ENCODE measurements at regions of chr2 and their contacts with region 1.

Region 1: DNA sequence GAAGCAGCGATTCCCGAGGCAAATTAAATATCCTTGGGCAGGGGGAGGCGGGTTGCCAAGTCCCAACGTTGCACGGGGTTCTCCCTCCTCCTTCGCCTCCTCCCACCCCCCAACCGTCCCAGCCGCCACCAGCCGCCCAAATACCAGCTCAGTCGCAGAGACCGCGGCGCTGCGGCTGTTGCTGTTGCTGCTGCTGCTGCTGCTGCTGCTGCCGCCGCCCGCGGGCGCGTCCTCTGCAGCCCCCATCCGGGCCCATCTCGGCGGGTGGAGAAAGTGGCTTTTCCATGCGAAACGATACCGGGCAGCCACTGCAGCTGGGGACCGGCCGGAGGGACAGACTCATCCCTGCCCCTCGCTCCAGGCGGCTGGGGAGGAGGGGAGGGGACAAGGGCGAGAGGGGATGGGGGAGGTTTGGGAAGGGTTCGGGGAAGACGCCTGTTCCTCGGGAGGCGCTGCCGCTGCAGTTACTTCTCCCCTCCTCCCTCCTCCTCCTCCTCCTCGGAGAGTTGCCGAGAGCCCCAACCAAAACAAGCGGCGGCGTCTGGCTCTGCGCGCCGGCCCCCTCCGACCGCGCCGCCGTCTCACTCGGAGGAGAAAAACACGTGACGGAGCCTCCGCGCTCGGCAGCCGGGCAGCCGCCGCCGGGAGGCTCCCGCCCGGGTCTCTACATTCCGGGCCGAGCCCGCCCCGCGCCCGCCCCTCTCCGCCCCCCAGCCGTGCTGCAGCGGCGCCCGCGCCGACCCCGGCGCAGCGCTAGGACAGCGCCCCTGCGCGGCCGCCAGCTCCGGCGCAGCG is at the start of gene IRS1:
- DNase-seq: peak; percentile 87
- H3K4me3 ChIP-seq: peak within 1 kb of the TSS; percentile 89
- H3K27ac ChIP-seq: peak within 1 kb of the TSS; percentile 85
- H3K4me1 ChIP-seq: peaks cover 44% of the 10 kb centered on the region
- CTCF ChIP-seq: no peak
- total RNA-seq, gene IRS1: 15.9 and 18.1 TPM in 2 replicates

Region 2: DNA sequence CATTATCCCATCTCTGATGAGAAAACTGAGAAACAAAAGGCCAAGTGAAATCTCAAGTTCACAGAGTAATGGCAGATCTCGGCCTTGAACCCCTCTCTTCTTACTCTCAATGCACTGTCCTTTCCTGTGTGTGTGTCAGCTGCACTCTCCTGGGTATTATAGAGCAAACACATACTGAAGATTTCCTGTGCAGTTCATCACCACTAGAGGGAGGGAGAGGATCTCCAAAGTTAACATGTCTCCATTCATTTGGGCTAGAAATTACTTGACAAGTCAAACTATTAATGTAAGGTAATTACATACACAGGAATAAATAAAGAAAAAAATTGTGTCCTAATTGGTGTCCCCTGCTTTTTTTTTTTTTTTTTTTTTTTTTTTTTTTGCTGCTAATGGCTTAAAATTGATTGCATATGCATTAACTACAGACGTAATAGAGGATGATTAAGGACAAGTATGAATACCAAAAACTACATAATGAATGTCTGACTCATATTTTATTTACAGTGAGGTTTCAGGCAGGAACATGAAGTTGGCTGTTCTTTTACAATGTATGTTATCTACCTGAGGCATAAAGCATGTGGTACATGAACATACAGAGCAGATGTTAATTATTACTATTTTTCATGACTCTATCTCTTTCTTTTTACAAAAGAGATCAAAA is 1130.6 kb before region 1 on chr2:
- CTCF ChIA-PET with region 1: interaction called, 4 read pairs
- POLR2A ChIA-PET with region 1: interaction called, 4 read pairs
- intact Hi-C with region 1: loop called (anchors 2 kb)
- DNase-seq: peak; percentile 70
- H3K4me3 ChIP-seq: no peak overlapping the region
- H3K27ac ChIP-seq: no peak overlapping the region
- H3K4me1 ChIP-seq: no peaks in the 10 kb centered on the region
- CTCF ChIP-seq: peak; percentile 86

Region 3: DNA sequence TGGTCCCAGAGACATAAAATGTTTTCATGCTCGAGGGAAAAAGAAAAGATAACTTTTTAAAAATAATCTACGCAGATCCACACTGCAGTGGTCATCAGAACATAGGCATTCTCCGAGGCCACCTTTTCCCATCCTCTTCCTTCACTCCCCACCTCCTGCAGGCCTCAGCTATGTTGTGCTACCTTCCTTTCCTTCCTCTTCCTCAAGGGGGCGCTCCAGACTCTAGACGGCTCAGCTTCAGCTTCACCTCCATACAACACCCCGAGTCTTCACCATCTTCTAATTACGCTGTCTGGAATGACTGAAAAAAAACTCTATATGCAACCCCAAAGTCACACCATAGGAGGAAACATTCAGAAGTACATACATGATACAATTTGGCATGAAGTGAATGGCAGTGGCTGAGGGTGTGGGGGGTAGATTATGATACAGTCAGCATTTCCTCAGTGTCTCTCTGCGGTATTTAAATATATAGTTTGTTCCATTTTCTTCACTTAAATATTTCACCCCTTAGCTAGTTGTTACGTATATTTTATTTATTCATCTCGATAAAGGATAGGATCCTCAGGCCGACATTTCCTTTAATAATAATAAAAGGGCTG is 583.4 kb before region 1 on chr2:
- CTCF ChIA-PET with region 1: no interaction called
- POLR2A ChIA-PET with region 1: no interaction called
- intact Hi-C with region 1: loop called (anchors 2 kb)
- DNase-seq: peak; percentile 56
- H3K4me3 ChIP-seq: no peak overlapping the region
- H3K27ac ChIP-seq: no peak overlapping the region
- H3K4me1 ChIP-seq: no peaks in the 10 kb centered on the region
- CTCF ChIP-seq: peak; percentile 91

Region 4: DNA sequence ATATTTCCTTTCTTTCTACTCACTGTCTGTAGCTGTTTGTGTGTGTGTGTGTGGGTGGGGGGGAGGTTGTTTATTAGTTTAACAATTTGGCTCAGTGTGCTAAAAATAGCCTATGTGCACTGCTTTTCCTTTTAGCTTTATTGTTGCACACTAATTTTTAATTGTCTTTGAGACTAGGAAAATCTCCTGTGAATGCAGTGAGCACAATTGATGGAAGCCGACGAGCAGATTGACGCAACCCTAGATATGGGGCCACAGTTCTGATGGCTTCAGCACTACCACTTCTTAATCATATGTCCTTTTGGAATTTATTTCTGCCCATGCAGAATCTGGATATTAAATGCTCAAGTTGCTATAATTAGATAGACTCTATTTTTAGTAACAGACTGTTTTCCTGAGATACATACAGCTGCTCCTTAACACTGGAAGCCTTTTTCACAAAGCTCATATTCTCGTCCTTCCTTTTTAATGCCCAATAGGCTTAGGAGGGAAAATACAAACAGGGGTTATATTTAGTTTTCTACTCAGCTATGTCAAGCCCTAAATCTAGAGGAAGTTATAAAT is 108.8 kb before region 1 on chr2:
- CTCF ChIA-PET with region 1: no interaction called
- POLR2A ChIA-PET with region 1: no interaction called
- intact Hi-C with region 1: loop called (anchors 5 kb)
- DNase-seq: no peak
- H3K4me3 ChIP-seq: no peak overlapping the region
- H3K27ac ChIP-seq: no peak overlapping the region
- H3K4me1 ChIP-seq: no peaks in the 10 kb centered on the region
- CTCF ChIP-seq: no peak

Region 5: DNA sequence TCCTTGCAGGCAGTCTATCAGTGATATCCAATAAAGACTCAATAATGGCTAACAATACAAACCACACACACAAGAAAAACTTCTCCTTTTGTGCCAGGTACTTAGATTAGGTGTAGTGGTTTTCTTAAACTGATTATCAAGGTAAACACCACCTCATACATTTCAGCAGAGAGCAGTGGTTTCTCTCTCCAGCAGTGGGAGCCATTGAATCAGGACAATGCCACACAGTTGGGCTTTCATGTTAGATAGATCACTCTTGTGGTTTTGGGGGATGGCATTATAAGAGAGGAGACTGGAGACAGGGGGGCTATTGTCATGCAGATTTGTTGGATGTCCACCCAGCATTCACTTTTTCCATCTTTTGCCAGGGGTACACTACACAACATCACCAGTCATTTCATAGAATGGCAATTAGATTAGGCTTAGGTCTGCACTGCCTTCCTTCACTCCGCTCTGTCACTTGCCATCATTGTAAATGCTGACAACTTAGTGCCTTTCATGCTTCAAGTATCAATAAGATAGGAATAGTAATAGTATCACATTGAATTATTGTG is 13.8 kb after region 1 on chr2:
- CTCF ChIA-PET with region 1: interaction called, 3 read pairs
- POLR2A ChIA-PET with region 1: interaction called, 11 read pairs
- intact Hi-C with region 1: no loop called
- DNase-seq: peak; percentile 60
- H3K4me3 ChIP-seq: no peak overlapping the region
- H3K27ac ChIP-seq: no peak overlapping the region
- H3K4me1 ChIP-seq: no peaks in the 10 kb centered on the region
- CTCF ChIP-seq: peak; percentile 91

Region 6: GRCh38 chr2:226906163-226906693 is 106.8 kb after region 1 on chr2:
- CTCF ChIA-PET with region 1: no interaction called
- POLR2A ChIA-PET with region 1: interaction called, 4 read pairs
- intact Hi-C with region 1: loop called (anchors 1 kb)
- DNase-seq: peak; percentile 93
- H3K4me3 ChIP-seq: peak overlapping the region; percentile 70
- H3K27ac ChIP-seq: peak overlapping the region; percentile 98
- H3K4me1 ChIP-seq: peaks cover 95% of the 10 kb centered on the region
- CTCF ChIP-seq: no peak

Region 7: GRCh38 chr2:226984750-226985582 is 185.6 kb after region 1 on chr2:
- CTCF ChIA-PET with region 1: interaction called, 4 read pairs
- POLR2A ChIA-PET with region 1: interaction called, 26 read pairs
- intact Hi-C with region 1: loop called (anchors 1 kb)
- DNase-seq: peak; percentile 83
- H3K4me3 ChIP-seq: peak overlapping the region; percentile 33
- H3K27ac ChIP-seq: peak overlapping the region; percentile 89
- H3K4me1 ChIP-seq: peaks cover 60% of the 10 kb centered on the region
- CTCF ChIP-seq: peak; percentile 95